CD4-positive, alpha-beta T cell (primary cell): ENCODE measurements at regions of chr20 and their contacts with region 1.

Region 1: GRCh38 chr20:2713285-2713684 is 20.7 kb downstream of the EBF4 start:
- DNase-seq: peak in 4 of 14 experiments; percentile 18 to 72 (median 66)
- ATAC-seq: peak; percentile 70
- H3K4me3 ChIP-seq: no peak overlapping the region
- H3K4me3 Mint-ChIP-seq: no peak overlapping the region
- H3K27ac ChIP-seq: no peak overlapping the region
- H3K27ac Mint-ChIP-seq: no peak overlapping the region
- H3K4me1 ChIP-seq: peaks cover 5% of the 10 kb centered on the region
- H3K4me1 Mint-ChIP-seq: no peaks in the 10 kb centered on the region
- H3K27me3 ChIP-seq: peaks cover under 1 to 5% of the 10 kb centered on the region in 2 experiments
- H3K27me3 Mint-ChIP-seq: peaks cover 4% of the 10 kb centered on the region
- CTCF ChIP-seq: peak; percentile 80

Region 2: GRCh38 chr20:2742934-2743559 is 29.8 kb after region 1 on chr20:
- CTCF ChIA-PET with region 1: interaction called, 18 read pairs
- POLR2A ChIA-PET with region 1: interaction called, 25 read pairs
- intact Hi-C with region 1: loop called (anchors 1 kb)
- DNase-seq: peak; percentile 60 to 88 (median 70)
- ATAC-seq: peak; percentile 54
- H3K4me3 ChIP-seq: no peak overlapping the region
- H3K4me3 Mint-ChIP-seq: peak overlapping the region; percentile 59
- H3K27ac ChIP-seq: peak overlapping the region in 1 of 2 donors; percentile 60
- H3K27ac Mint-ChIP-seq: peak overlapping the region; percentile 90
- H3K4me1 ChIP-seq: peaks cover 47% of the 10 kb centered on the region
- H3K4me1 Mint-ChIP-seq: peaks cover 51% of the 10 kb centered on the region
- H3K27me3 ChIP-seq: no peaks in the 10 kb centered on the region
- H3K27me3 Mint-ChIP-seq: no peaks in the 10 kb centered on the region
- CTCF ChIP-seq: peak; percentile 90

Region 3: GRCh38 chr20:2752567-2753460 is 39.5 kb after region 1 on chr20:
- CTCF ChIA-PET with region 1: interaction called, 17 read pairs
- POLR2A ChIA-PET with region 1: interaction called, 9 read pairs
- intact Hi-C with region 1: loop called in 1 of 2 experiments (anchors 1 kb)
- DNase-seq: peak in 13 of 14 experiments; percentile 19 to 76 (median 47)
- ATAC-seq: peak; percentile 37
- H3K4me3 ChIP-seq: peak overlapping the region; percentile 60
- H3K4me3 Mint-ChIP-seq: peak overlapping the region; percentile 90
- H3K27ac ChIP-seq: no peak overlapping the region
- H3K27ac Mint-ChIP-seq: no peak overlapping the region
- H3K4me1 ChIP-seq: peaks cover 40% of the 10 kb centered on the region
- H3K4me1 Mint-ChIP-seq: peaks cover 28% of the 10 kb centered on the region
- H3K27me3 ChIP-seq: peaks cover 12 to 13% of the 10 kb centered on the region in 2 experiments
- H3K27me3 Mint-ChIP-seq: peaks cover 17% of the 10 kb centered on the region
- CTCF ChIP-seq: peak; percentile 81

Region 4: GRCh38 chr20:2780948-2781347 is 67.7 kb after region 1 on chr20:
- CTCF ChIA-PET with region 1: no interaction called
- POLR2A ChIA-PET with region 1: no interaction called
- intact Hi-C with region 1: no loop called
- DNase-seq: no peak
- ATAC-seq: no peak
- H3K4me3 ChIP-seq: no peak overlapping the region
- H3K4me3 Mint-ChIP-seq: no peak overlapping the region
- H3K27ac ChIP-seq: no peak overlapping the region
- H3K27ac Mint-ChIP-seq: no peak overlapping the region
- H3K4me1 ChIP-seq: no peaks in the 10 kb centered on the region
- H3K4me1 Mint-ChIP-seq: no peaks in the 10 kb centered on the region
- H3K27me3 ChIP-seq: no peaks in the 10 kb centered on the region
- H3K27me3 Mint-ChIP-seq: peaks cover 32% of the 10 kb centered on the region
- CTCF ChIP-seq: no peak

Region 5: GRCh38 chr20:3000852-3001523 is 287.7 kb after region 1 on chr20:
- CTCF ChIA-PET with region 1: no interaction called
- POLR2A ChIA-PET with region 1: no interaction called
- intact Hi-C with region 1: loop called in 1 of 2 experiments (anchors 2 kb)
- DNase-seq: peak in 4 of 14 experiments; percentile 7 to 65 (median 56)
- ATAC-seq: peak; percentile 89
- H3K4me3 ChIP-seq: no peak overlapping the region
- H3K4me3 Mint-ChIP-seq: no peak overlapping the region
- H3K27ac ChIP-seq: no peak overlapping the region
- H3K27ac Mint-ChIP-seq: no peak overlapping the region
- H3K4me1 ChIP-seq: no peaks in the 10 kb centered on the region
- H3K4me1 Mint-ChIP-seq: no peaks in the 10 kb centered on the region
- H3K27me3 ChIP-seq: no peaks in the 10 kb centered on the region
- H3K27me3 Mint-ChIP-seq: no peaks in the 10 kb centered on the region
- CTCF ChIP-seq: peak; percentile 60